ENCODE measurements at regions of chr12 and their contacts with region 1.

Region 1: DNA sequence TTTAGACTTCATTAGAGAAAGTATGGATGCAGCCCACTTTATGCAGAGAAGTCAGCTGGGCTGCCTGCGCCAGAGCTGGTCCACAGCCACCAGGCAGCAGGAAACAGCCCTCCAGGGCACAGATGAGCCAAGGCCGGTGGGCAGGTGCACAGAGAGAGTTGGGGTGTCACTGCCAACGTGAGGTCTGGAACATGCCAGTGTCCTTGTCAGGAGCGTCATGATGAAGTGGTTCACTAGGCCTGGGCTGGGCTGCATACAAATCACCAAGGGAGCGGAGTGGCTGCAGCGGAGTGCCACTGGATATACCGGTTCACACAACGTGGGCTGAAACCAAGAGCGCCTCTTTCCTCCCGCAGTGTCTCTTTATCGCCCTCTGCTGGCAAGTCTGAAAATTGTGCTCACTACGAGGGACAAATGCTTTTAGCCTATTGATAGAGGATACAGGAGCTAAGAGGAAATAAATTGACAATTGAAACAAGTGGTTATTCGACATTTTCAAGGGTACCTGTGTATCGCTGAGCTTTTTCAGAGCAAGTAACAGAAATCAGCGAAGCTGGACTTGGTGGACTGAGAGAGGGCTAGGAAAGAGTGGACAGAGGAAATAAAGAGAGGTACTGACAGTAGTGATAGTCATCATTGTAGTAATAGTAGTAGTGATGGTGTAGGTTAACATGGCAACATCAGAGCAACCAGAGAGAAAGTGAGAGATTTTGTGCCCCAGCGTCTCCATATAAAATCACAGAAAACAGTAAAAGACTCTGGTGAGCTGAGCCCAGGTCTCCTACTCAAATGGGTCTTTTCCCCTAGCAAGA is 52.0 kb upstream of the ITPR2 start:
- DNase-seq: peak; percentile 4
- H3K4me3 ChIP-seq: no peak overlapping the region
- CTCF ChIP-seq: peak; percentile 94

Region 2: GRCh38 chr12:26629864-26630263 is 255.1 kb before region 1 on chr12:
- CTCF ChIA-PET with region 1: interaction called, 10 read pairs
- POLR2A ChIA-PET with region 1: no interaction called
- DNase-seq: no peak
- H3K4me3 ChIP-seq: peak overlapping the region; percentile 4
- CTCF ChIP-seq: peak; percentile 39

Region 3: DNA sequence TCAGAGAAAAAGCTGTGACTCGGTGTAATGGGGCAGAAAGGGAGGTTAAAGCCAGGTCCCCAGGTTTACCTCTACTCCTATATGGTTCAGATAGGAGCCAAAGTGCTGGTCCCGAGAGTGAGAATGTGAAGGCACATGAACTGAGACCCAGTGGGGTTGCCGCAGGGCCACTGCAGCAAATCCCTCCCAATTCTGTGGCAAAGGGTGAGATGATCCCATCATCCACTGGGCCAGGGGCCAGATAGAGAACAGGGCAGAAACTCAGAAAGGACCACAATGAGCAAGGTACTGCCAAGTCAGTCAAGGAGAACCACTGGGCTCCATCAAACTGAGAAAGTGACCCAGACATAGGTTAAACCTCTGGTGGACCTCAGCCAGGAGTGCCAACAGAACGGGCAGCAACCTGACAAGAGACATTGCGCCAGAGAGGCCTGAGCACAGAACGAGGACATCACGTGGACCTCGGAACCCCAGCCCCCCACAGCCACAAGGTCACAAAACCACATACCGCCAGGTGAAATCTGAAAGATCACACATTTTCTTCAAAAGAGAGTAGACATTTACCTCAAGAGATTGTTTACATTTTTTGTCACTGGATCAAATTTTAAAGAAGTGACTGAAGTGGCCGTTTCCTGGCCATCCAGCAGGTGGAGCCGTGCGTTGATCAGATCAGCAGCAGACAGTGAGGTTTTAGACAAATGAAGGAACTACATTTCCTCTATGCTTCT is 31.5 kb before region 1 on chr12:
- CTCF ChIA-PET with region 1: interaction called, 54 read pairs
- POLR2A ChIA-PET with region 1: no interaction called
- DNase-seq: no peak
- H3K4me3 ChIP-seq: no peak overlapping the region
- CTCF ChIP-seq: peak; percentile 77

Region 4: GRCh38 chr12:26870491-26871419 is 14.2 kb before region 1 on chr12:
- CTCF ChIA-PET with region 1: interaction called, 51 read pairs
- POLR2A ChIA-PET with region 1: no interaction called
- DNase-seq: peak; percentile 10
- H3K4me3 ChIP-seq: no peak overlapping the region
- CTCF ChIP-seq: no peak

Region 5: DNA sequence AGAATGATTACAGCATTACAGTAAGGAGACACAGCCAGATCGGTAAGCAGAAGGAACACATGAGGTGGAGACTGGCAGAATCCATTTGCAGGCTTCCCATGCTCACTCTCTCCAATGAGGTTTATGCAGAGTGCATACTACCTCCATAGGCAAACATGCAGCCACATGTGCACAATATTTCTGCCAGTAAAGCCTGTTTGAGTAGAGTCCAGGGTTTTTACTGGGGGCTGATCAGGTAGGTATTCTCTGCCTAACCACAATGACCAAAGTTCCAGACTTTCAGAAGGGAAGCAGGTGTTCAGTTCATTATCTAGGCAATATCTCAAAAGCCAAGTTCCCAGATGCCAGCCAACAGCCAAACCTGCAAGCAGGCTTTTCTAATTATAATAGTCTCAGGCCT is 21.7 kb after region 1 on chr12:
- CTCF ChIA-PET with region 1: interaction called, 17 read pairs
- POLR2A ChIA-PET with region 1: no interaction called
- DNase-seq: no peak
- H3K4me3 ChIP-seq: no peak overlapping the region
- CTCF ChIP-seq: no peak

Region 6: GRCh38 chr12:27083861-27084394 is 199.0 kb after region 1 on chr12:
- CTCF ChIA-PET with region 1: no interaction called
- POLR2A ChIA-PET with region 1: no interaction called
- DNase-seq: no peak
- H3K4me3 ChIP-seq: no peak overlapping the region
- CTCF ChIP-seq: no peak

Measured in AG04449 (cell line).